Heart right ventricle (tissue), 16 donors: ENCODE measurements at regions of chr4 and their contacts with region 1.

Region 1: GRCh38 chr4:47668810-47669408 is 169.0 kb downstream of the CORIN start:
- DNase-seq: peak in 1 of 2 donors; percentile 32
- ATAC-seq: peak in 6 of 8 donors; percentile 61 to 71 (median 68)
- H3K4me3 ChIP-seq: no peak overlapping the region
- H3K27ac ChIP-seq: no peak overlapping the region
- H3K4me1 ChIP-seq: no peaks in the 10 kb centered on the region
- H3K27me3 ChIP-seq: no peaks in the 10 kb centered on the region
- CTCF ChIP-seq: peak; percentile 57 to 76 (median 70)

Region 2: GRCh38 chr4:47106561-47106960 is 562.3 kb before region 1 on chr4:
- intact Hi-C with region 1: no loop called
- DNase-seq: no peak
- ATAC-seq: no peak
- H3K4me3 ChIP-seq: no peak overlapping the region
- H3K27ac ChIP-seq: no peak overlapping the region
- H3K4me1 ChIP-seq: no peaks in the 10 kb centered on the region
- H3K27me3 ChIP-seq: no peaks in the 10 kb centered on the region
- CTCF ChIP-seq: no peak

Region 3: GRCh38 chr4:47624031-47624441 is 44.9 kb before region 1 on chr4:
- intact Hi-C with region 1: no loop called
- DNase-seq: no peak
- ATAC-seq: no peak
- H3K4me3 ChIP-seq: no peak overlapping the region
- H3K27ac ChIP-seq: no peak overlapping the region
- H3K4me1 ChIP-seq: no peaks in the 10 kb centered on the region
- H3K27me3 ChIP-seq: no peaks in the 10 kb centered on the region
- CTCF ChIP-seq: no peak

Region 4: DNA sequence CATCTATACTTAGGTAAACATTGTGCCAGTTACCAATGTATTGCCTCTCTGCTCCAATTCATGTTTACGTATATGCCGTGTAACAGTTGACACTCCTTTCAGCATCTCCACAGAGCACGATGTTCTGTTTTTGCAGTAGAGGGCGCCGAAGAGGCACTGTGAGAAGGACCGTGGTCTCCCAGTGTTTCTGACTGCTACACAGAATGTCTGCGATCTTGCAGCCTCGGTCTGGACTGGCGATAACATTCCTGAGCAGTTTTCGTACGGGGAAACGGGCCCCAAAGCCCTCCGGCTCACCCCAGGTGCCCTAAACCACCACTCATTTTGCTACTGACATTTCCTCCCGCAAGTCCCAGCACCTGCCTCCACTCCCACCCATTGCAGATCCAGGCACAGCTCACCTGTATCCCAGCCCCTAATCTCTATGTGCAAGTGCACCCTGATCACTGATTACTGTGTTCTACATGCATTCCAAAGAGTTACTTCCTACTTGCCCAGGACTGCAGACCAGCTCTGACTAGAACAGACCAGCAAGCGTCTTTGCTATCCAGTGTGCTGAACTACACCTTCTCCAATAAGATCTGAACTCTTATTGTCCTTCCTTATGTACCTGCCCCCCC is 257.8 kb after region 1 on chr4:
- intact Hi-C with region 1: loop called in 5 of 10 experiments (anchors 5 to 10 kb)
- DNase-seq: peak; percentile 17 to 41
- ATAC-seq: peak in 7 of 8 donors; percentile 64 to 87 (median 80)
- H3K4me3 ChIP-seq: peak overlapping the region in 3 of 10 donors; percentile 12 to 21 (median 19)
- H3K27ac ChIP-seq: no peak overlapping the region
- H3K4me1 ChIP-seq: peaks cover 0 to 17% (median 6%) of the 10 kb centered on the region in 9 donors
- H3K27me3 ChIP-seq: peaks cover 0 to 32% (median 12%) of the 10 kb centered on the region in 7 donors
- CTCF ChIP-seq: peak in 8 of 9 donors; percentile 35 to 73 (median 62)